ENCODE measurements at regions of chr7 and their contacts with region 1.

Region 1: GRCh38 chr7:151080522-151081169 is at the start of gene FASTK:
- DNase-seq: peak; percentile 90
- ATAC-seq: peak; percentile 85
- H3K4me3 Mint-ChIP-seq: peak within 1 kb of the TSS; percentile 100
- H3K27ac Mint-ChIP-seq: peak within 1 kb of the TSS; percentile 83
- H3K4me1 Mint-ChIP-seq: peaks cover 30% of the 10 kb centered on the region
- H3K27me3 Mint-ChIP-seq: peaks cover 12% of the 10 kb centered on the region
- total RNA-seq, gene FASTK: 96.5 to 100 TPM

Region 2: DNA sequence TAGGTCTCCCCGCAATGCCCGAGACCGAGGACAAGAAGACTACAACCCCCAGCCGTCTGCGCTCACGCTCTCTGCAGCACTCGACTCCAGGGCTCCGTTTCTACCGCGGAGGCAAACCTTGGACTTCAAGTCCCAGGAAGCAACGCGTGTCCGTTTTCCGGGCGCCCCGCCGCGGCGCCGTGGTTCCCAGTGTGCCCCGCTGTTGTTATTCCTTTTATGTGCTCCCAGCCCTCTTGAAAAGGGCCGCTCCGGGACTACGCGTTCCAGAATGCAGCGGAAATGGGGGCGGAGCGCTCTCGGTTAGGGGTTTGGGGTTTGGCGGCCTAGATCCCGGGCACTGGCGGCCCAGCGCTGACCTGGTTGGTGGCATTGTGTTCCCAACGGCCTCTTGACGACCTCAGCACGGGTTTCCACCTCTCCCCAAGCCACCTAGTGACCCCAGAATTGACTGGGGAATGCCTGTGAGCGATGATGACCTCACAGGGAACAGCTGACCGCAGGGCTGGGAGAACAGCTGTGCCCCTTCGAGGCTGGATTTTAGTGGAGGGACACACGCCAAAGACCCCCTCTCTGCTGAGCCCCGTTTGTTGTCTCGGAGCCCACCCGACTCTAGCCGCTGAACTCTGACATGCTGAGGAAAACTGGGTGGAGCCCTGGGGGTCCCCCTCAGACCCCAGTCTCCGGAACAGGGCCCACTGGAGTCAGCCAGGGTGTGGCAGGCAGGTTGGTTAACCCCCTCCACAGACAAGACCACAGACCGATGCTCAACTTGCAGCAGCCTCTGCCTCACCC is 22.5 kb before region 1 on chr7:
- POLR2A ChIA-PET with region 1: interaction called, 32 read pairs
- DNase-seq: peak; percentile 94
- ATAC-seq: peak; percentile 94
- H3K4me3 Mint-ChIP-seq: peak overlapping the region; percentile 98
- H3K27ac Mint-ChIP-seq: peak overlapping the region; percentile 93
- H3K4me1 Mint-ChIP-seq: peaks cover 30% of the 10 kb centered on the region
- H3K27me3 Mint-ChIP-seq: no peaks in the 10 kb centered on the region

Region 3: DNA sequence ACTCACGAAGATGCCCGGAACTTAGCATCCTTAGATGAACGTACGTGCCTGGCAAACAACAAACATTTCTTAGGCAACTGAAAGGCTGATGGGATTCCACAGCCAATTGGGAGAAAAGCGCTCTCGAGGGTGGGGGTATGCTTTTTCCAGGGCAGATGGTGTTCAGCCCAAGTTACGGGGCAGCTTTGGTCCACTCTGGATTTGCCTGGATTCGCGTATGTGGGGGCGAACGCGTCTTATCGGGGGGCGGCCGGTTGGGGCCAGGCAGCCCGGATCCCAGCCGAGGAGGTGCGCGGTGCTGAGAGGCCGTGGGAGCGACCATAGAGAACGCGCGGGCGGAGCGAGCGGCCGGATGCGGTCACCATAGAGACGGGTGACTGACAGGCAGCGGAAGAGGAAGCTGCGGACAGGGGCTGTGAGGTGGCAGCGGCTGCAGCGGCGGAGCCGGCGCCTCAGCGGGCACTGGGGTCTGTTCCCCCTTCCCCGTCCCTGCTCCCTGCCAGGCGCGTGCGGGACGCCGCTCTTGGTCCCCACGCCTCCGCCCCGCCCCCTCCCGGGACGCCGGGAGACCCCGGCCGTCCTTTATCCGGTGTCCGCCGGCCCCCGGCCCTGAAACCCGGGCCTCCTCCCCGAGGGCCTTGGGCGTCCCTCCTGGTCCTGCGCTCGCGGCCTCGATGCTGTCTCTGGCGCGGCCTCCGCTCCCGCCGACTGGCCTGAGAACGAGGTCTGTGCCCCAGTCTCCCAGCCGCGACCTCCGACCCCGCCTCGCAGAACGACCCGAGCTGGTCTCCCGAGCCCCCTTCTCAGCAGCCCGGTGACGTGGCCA is 151.7 kb after region 1 on chr7 and contains the start of gene CHPF2:
- POLR2A ChIA-PET with region 1: no interaction called
- DNase-seq: peak; percentile 91
- ATAC-seq: peak; percentile 88
- H3K4me3 Mint-ChIP-seq: peak within 1 kb of the TSS; percentile 99
- H3K27ac Mint-ChIP-seq: peak within 1 kb of the TSS; percentile 99
- H3K4me1 Mint-ChIP-seq: peaks cover 20% of the 10 kb centered on the region
- H3K27me3 Mint-ChIP-seq: peaks cover 6% of the 10 kb centered on the region
- total RNA-seq, gene CHPF2: 44.3 to 48.4 TPM